HCT116 (cell line): ENCODE measurements at regions of chr3 and their contacts with region 1.

Region 1: DNA sequence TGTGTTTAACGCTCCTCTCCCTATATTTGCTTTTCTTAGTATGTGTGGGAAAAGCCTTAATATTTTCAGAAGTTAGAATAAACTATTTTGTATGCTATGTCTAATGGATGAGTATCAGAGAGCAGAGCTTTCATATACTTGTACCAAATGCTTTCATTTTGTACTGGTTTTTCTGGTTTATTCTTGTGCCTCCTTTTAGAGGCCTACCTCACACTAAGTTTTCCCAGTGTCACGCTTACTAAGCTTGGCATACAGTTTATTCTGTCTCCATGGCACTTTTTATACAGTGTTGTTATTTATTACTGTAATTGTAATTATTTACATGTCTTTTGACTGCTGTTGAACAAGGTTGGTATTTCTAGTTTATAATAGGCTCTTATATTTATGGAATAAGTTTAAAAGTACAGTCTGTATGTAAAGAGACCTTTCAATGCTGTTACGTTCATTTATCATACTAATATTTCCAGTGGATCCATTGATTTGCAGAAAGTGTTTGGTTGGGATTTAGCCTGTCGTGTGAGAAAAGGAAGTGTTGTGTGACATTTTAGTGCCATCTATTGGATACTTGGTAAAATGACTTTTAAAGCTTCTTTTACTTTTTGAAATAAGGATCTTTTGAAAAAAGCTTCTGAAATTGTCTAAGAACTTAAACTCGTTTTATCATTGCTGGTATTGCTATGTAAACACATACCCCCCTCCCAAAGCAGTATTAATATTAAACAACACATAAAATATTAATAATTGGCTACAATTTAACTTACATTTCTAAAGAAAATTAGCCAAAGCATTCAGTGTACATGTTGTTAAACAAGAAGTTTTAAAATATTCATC is 5.2 kb upstream of the EBLN2 start:
- DNase-seq: peak; percentile 32
- ATAC-seq: peak; percentile 17; the same call in 1 of the 2 replicates
- H3K4me3 ChIP-seq: no peak overlapping the region
- H3K27ac ChIP-seq: no peak overlapping the region
- H3K4me1 ChIP-seq: no peaks in the 10 kb centered on the region
- H3K27me3 ChIP-seq: no peaks in the 10 kb centered on the region
- CTCF ChIP-seq: peak; percentile 34 to 61 (median 40); a peak in 4 of 6 replicates
- POLR2A ChIP-seq: no peak
- RAD21 ChIP-seq: peak; percentile 58

Region 2: GRCh38 chr3:72629191-72629631 is 427.0 kb before region 1 on chr3:
- CTCF ChIA-PET with region 1: no interaction called
- POLR2A ChIA-PET with region 1: no interaction called
- RAD21 ChIA-PET with region 1: no interaction called
- intact Hi-C with region 1: no loop called
- DNase-seq: no peak
- ATAC-seq: 0 out of 2 replicates have a peak, but pooled peaks have one; percentile 21
- H3K4me3 ChIP-seq: no peak overlapping the region
- H3K27ac ChIP-seq: no peak overlapping the region
- H3K4me1 ChIP-seq: peaks cover 31 to 50% of the 10 kb centered on the region in 2 experiments
- H3K27me3 ChIP-seq: no peaks in the 10 kb centered on the region
- CTCF ChIP-seq: no peak
- POLR2A ChIP-seq: no peak
- RAD21 ChIP-seq: no peak

Region 3: DNA sequence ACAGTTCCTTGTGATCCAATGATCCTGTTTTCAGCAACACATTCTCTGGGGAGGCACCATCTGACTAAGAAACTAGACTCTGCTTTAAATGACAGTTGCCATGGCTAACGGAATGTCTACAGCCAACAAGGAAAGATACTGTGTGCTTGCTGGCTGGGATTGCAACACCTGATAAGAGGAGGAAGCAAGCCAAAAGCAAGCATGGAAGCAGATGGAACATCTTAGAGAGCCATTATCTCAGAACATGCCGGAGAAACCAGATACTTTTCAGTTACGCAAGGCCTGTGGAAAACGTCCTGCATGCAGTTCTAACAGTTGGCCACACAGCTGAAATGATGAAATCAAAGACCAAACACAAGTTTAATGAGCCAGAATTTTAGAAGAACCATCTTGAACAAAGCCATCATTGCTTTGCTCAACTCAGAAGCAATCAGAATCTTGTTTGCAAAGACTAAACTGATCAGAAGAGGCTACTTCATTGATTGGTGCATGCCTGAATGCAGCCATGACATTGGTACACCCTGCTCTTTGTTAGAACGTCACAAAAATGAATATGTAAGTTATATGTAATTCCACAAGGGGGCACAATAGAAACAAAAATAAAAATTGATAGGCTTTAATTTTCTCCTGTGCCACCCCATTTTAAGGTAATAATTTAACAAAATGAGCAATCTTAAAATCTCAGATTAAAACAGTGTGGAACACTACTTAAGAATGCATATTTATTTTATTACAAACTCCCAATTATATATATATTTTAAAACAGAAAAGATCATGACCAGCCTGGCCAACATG is 117.6 kb before region 1 on chr3:
- CTCF ChIA-PET with region 1: interaction called, 28 read pairs
- POLR2A ChIA-PET with region 1: no interaction called
- RAD21 ChIA-PET with region 1: no interaction called
- intact Hi-C with region 1: loop called (anchors 1 kb)
- DNase-seq: peak; percentile 54
- ATAC-seq: peak; percentile 98
- H3K4me3 ChIP-seq: no peak overlapping the region
- H3K27ac ChIP-seq: no peak overlapping the region
- H3K4me1 ChIP-seq: peaks cover 0 to 6% of the 10 kb centered on the region in 2 experiments; a peak in 2 of 4 replicates
- H3K27me3 ChIP-seq: no peaks in the 10 kb centered on the region
- CTCF ChIP-seq: peak; percentile 29 to 72 (median 70); a peak in 5 of 6 replicates
- POLR2A ChIP-seq: no peak
- RAD21 ChIP-seq: peak; percentile 70

Region 4: GRCh38 chr3:73490453-73491286 is 434.4 kb after region 1 on chr3:
- CTCF ChIA-PET with region 1: no interaction called
- POLR2A ChIA-PET with region 1: no interaction called
- RAD21 ChIA-PET with region 1: no interaction called
- intact Hi-C with region 1: no loop called
- DNase-seq: no peak
- ATAC-seq: no peak
- H3K4me3 ChIP-seq: no peak overlapping the region
- H3K27ac ChIP-seq: no peak overlapping the region
- H3K4me1 ChIP-seq: no peaks in the 10 kb centered on the region
- H3K27me3 ChIP-seq: no peaks in the 10 kb centered on the region
- CTCF ChIP-seq: no peak
- POLR2A ChIP-seq: no peak
- RAD21 ChIP-seq: no peak